Activated CD8-positive, alpha-beta T cell treated with anti-CD3 and anti-CD28 coated beads for 36 hours (primary cell): ENCODE measurements at regions of chrX and their contacts with region 1.

Region 1: GRCh38 chrX:38166478-38167083 is 54.1 kb downstream of the SRPX start:
- DNase-seq: peak; percentile 23
- ATAC-seq: no peak
- H3K4me3 Mint-ChIP-seq: no peak overlapping the region
- H3K27ac Mint-ChIP-seq: no peak overlapping the region
- H3K4me1 Mint-ChIP-seq: no peaks in the 10 kb centered on the region
- H3K27me3 Mint-ChIP-seq: peaks cover 3% of the 10 kb centered on the region
- CTCF ChIP-seq: peak; percentile 35

Region 2: DNA sequence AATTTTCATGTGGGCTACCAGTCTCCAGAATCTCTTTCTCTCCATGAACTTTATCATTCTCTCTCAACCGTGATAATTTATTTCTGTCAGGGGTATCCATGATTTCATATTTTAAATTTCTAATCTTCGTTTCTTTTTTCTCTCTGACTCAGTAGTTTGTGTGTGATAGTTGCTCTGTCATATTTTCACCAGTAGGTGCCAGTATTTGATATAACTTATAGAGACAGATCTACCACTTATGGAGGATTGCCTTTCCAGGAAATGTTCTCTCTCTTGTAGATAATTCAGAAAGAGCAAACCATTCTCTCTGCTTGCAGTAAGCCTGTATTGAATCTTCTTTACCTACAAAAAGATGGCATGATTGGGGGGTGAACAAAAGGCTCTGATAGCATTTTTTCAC is 239.9 kb before region 1 on chrX:
- CTCF ChIA-PET with region 1: interaction called, 24 read pairs
- POLR2A ChIA-PET with region 1: no interaction called
- intact Hi-C with region 1: loop called (anchors 2 kb)
- DNase-seq: no peak
- ATAC-seq: peak; percentile 56
- H3K4me3 Mint-ChIP-seq: no peak overlapping the region
- H3K27ac Mint-ChIP-seq: no peak overlapping the region
- H3K4me1 Mint-ChIP-seq: no peaks in the 10 kb centered on the region
- H3K27me3 Mint-ChIP-seq: peaks cover 9% of the 10 kb centered on the region
- CTCF ChIP-seq: peak; percentile 14

Region 3: DNA sequence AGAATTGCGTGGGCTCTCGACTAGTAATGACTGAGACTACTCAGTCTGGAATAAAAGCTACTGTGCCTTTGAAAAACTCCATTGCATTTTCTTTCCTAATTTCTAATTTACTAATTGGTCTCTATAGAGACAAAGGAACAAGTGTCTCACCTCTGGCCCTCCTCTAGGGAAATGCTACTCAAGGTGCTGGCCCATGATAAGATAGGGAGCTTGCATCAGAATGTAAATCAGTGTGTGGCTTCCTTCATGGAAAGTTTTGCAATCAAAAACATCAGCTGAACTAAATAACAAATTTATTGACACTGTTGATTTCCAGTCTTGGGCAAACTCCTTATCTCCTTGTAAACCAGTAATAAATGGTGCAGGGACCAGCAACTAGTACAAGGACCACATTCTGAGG is 27.7 kb before region 1 on chrX:
- CTCF ChIA-PET with region 1: no interaction called
- POLR2A ChIA-PET with region 1: no interaction called
- intact Hi-C with region 1: no loop called
- DNase-seq: no peak
- ATAC-seq: no peak
- H3K4me3 Mint-ChIP-seq: no peak overlapping the region
- H3K27ac Mint-ChIP-seq: no peak overlapping the region
- H3K4me1 Mint-ChIP-seq: no peaks in the 10 kb centered on the region
- H3K27me3 Mint-ChIP-seq: peaks cover 7% of the 10 kb centered on the region
- CTCF ChIP-seq: no peak